MCF 10A (cell line): ENCODE measurements at regions of chr2 and their contacts with region 1.

Region 1: DNA sequence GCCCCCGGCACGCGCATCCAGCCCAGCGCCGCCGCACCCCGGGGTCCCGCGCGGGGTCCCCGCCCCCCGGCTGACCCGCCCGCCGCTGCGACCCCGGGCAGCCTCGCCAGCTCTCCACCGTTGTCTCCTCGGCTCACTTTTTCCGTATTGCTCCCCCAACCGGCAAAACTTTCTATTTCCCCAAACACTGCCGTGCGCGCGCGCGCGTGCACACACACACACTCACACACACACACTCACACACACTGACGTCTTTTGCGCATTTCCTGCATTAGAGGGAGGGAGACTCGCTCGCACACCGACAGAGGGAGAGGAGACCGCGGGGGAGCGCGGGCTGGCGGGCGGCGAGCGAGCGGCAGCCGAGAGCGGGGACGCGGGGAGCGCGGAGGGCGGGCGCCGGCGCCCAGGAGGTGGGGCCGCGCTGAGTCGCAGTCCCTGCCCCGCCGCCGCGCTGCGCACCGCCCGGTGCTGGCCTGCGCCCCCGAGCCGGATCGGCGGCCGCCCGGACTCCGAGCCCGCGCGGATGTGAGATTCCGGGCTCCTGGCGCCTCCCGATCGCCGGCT is 542 bp upstream of the PRKCE start:
- DNase-seq: peak; percentile 95
- H3K4me3 Mint-ChIP-seq: peak overlapping the region; percentile 79
- H3K27ac Mint-ChIP-seq: peak overlapping the region; percentile 73
- H3K4me1 Mint-ChIP-seq: peaks cover 16% of the 10 kb centered on the region
- H3K27me3 Mint-ChIP-seq: no peaks in the 10 kb centered on the region
- CTCF ChIP-seq: peak; percentile 8

Region 2: GRCh38 chr2:45627911-45628310 is 23.0 kb before region 1 on chr2:
- CTCF ChIA-PET with region 1: no interaction called
- POLR2A ChIA-PET with region 1: no interaction called
- intact Hi-C with region 1: no loop called
- DNase-seq: no peak
- H3K4me3 Mint-ChIP-seq: no peak overlapping the region
- H3K27ac Mint-ChIP-seq: no peak overlapping the region
- H3K4me1 Mint-ChIP-seq: no peaks in the 10 kb centered on the region
- H3K27me3 Mint-ChIP-seq: no peaks in the 10 kb centered on the region
- CTCF ChIP-seq: no peak

Region 3: DNA sequence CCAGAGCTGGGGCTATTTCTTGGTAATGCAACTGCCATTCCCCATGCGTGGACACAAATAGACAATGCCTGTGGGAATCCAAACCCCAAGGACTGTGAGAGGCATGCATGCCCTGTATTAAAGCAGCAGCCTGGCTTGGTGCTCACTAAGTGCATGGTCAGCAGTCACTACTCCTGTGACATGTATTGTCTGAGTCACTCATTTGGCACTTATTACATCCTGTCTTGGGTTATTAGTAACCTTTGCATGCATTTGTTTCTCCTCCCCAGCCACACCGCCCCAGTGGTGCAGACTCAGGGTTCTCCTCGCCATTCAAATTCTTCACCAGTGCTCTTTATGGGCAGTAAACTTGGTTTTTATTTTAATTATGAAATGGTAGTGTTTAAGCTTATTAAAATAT is 30.7 kb after region 1 on chr2:
- CTCF ChIA-PET with region 1: interaction called, 3 read pairs
- POLR2A ChIA-PET with region 1: interaction called, 19 read pairs
- intact Hi-C with region 1: loop called (anchors 5 kb)
- DNase-seq: peak; percentile 84
- H3K4me3 Mint-ChIP-seq: no peak overlapping the region
- H3K27ac Mint-ChIP-seq: no peak overlapping the region
- H3K4me1 Mint-ChIP-seq: peaks cover 30% of the 10 kb centered on the region
- H3K27me3 Mint-ChIP-seq: no peaks in the 10 kb centered on the region
- CTCF ChIP-seq: no peak

Region 4: GRCh38 chr2:45778720-45779171 is 127.8 kb after region 1 on chr2:
- CTCF ChIA-PET with region 1: interaction called, 14 read pairs
- POLR2A ChIA-PET with region 1: interaction called, 8 read pairs
- intact Hi-C with region 1: loop called (anchors 1 kb)
- DNase-seq: peak; percentile 75
- H3K4me3 Mint-ChIP-seq: no peak overlapping the region
- H3K27ac Mint-ChIP-seq: no peak overlapping the region
- H3K4me1 Mint-ChIP-seq: peaks cover 7% of the 10 kb centered on the region
- H3K27me3 Mint-ChIP-seq: no peaks in the 10 kb centered on the region
- CTCF ChIP-seq: peak; percentile 72

Region 5: DNA sequence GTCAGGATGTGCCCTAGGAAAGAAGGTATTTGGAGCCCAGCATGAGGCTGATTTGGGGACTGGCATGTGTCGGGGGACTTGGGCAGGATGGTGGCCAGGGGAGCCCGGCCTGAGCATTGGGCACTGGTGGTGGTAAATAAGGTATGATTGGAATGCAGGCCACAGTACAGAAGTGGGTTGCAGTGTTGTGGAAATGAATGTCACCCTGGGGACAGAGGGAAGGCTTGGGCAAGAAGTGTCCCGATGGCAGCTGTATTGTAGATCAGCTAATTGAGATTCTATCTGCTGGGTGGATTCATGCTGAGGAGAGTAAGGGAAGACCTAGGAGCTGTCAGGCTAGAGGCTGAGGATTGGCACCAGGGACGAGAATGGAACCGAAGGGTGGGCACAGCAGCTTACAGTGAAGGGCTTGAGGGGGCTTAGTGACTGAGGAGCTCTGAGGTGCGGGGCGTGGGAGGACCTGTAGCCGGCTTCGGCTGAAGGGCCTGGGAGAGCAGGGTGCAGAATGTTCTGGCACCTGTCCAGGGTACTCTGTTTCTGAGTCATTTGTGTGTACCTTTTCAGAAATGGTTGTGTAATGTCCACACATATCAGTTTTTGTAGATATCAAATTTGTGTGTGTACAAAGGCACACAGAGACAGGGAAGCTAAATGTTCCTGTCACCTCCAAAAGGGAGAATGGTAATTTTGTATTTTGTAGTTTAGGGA is 170.8 kb after region 1 on chr2:
- CTCF ChIA-PET with region 1: interaction called, 8 read pairs
- POLR2A ChIA-PET with region 1: interaction called, 17 read pairs
- intact Hi-C with region 1: loop called (anchors 5 kb)
- DNase-seq: peak; percentile 93
- H3K4me3 Mint-ChIP-seq: peak overlapping the region; percentile 50
- H3K27ac Mint-ChIP-seq: peak overlapping the region; percentile 49
- H3K4me1 Mint-ChIP-seq: peaks cover 77% of the 10 kb centered on the region
- H3K27me3 Mint-ChIP-seq: no peaks in the 10 kb centered on the region
- CTCF ChIP-seq: no peak